Endothelial cell of umbilical vein (primary cell): ENCODE measurements at regions of chr3 and their contacts with region 1.

Region 1: GRCh38 chr3:94062431-94063404 is at the starts of genes DHFR2 and NSUN3:
- DNase-seq: peak; percentile 97
- H3K4me3 ChIP-seq: peak within 1 kb of the TSS; percentile 65 to 98 (median 88)
- H3K27ac ChIP-seq: peak within 1 kb of the TSS; percentile 92
- H3K4me1 ChIP-seq: peaks cover 17% of the 10 kb centered on the region
- H3K27me3 ChIP-seq: no peaks in the 10 kb centered on the region
- CTCF ChIP-seq: no peak
- POLR2A ChIP-seq: peak; percentile 74
- total RNA-seq, gene DHFR2: 2.1 and 2.2 TPM in 2 replicates
- total RNA-seq, gene NSUN3: 10.7 and 11.6 TPM in 2 replicates

Region 2: GRCh38 chr3:93906245-93906644 is 156.5 kb before region 1 on chr3:
- CTCF ChIA-PET with region 1: no interaction called
- POLR2A ChIA-PET with region 1: no interaction called
- dilution Hi-C with region 1: no loop called
- intact Hi-C with region 1: loop called (anchors 10 kb)
- DNase-seq: no peak
- H3K4me3 ChIP-seq: no peak overlapping the region
- H3K27ac ChIP-seq: no peak overlapping the region
- H3K4me1 ChIP-seq: no peaks in the 10 kb centered on the region
- H3K27me3 ChIP-seq: no peaks in the 10 kb centered on the region
- CTCF ChIP-seq: no peak
- POLR2A ChIP-seq: no peak

Region 3: GRCh38 chr3:93973131-93974126 is 89.3 kb before region 1 on chr3 and contains the start of gene PROS1:
- CTCF ChIA-PET with region 1: interaction called, 5 read pairs
- POLR2A ChIA-PET with region 1: interaction called, 4 read pairs
- dilution Hi-C with region 1: no loop called
- intact Hi-C with region 1: loop called (anchors 2 kb)
- DNase-seq: peak; percentile 81
- H3K4me3 ChIP-seq: peak within 1 kb of the TSS; percentile 51 to 82 (median 53)
- H3K27ac ChIP-seq: peak within 1 kb of the TSS; percentile 66
- H3K4me1 ChIP-seq: peaks cover 7% of the 10 kb centered on the region
- H3K27me3 ChIP-seq: peaks cover 5 to 11% of the 10 kb centered on the region in 2 experiments
- CTCF ChIP-seq: no peak
- POLR2A ChIP-seq: peak; percentile 65
- total RNA-seq, gene PROS1: 5.2 and 6.0 TPM in 2 replicates

Region 4: GRCh38 chr3:93979833-93980676 is 82.7 kb before region 1 on chr3 and contains the start of gene ARL13B:
- CTCF ChIA-PET with region 1: interaction called, 3 read pairs
- POLR2A ChIA-PET with region 1: no interaction called
- dilution Hi-C with region 1: no loop called
- intact Hi-C with region 1: loop called (anchors 1 kb)
- DNase-seq: peak; percentile 99
- H3K4me3 ChIP-seq: peak within 1 kb of the TSS; percentile 67 to 94 (median 92)
- H3K27ac ChIP-seq: peak within 1 kb of the TSS; percentile 74
- H3K4me1 ChIP-seq: peaks cover 15% of the 10 kb centered on the region
- H3K27me3 ChIP-seq: peaks cover 5 to 11% of the 10 kb centered on the region in 2 experiments
- CTCF ChIP-seq: no peak
- POLR2A ChIP-seq: peak; percentile 60
- total RNA-seq, gene ARL13B: 8.6 and 12.7 TPM in 2 replicates